ENCODE measurements at regions of chr19 and their contacts with region 1.

Region 1: DNA sequence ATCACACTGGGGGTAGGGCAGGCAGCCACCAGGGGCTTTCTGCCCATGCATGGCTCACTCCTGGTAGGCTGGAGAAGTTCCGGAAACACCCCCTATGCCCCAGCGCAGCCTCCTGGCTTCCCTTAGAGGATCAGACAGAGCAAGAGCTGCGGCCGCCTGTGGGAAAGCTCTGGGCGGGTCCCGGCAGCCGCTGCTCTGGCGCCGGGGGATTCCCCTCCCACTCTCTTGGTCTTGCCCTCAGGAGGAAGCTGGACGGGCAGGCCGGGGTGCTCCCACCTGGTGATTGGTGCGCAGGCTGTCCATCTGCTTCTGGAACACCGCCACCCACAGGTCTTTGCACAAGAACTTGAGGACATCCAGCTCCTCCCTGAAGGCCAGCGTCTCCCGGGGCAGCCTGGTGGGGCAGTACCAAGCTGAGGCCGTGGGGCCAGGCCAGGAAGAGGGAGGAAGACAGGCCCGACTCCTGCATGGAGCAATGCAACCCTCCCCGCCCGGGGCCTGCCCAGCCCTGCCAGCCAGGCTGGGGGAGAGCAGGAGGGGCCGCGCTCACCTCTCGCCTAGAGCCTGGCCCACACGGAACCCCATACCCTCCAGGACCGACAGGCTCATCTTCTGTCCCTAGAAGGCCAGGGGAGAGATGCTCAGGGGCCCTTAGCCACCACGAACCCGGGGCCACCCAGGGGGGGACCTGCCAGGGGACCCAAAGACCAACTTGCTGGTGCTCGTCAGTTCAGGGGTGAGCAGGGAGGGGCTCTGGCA is 4.0 kb upstream of the NKPD1 start:
- DNase-seq: peak in 4 of 5 donors; percentile 47 to 80 (median 50)
- ATAC-seq: peak; percentile 30 to 70 (median 64)
- H3K4me3 ChIP-seq: no peak overlapping the region
- H3K27ac ChIP-seq: peak overlapping the region in 2 of 12 donors; percentile 17 to 26
- H3K4me1 ChIP-seq: peaks cover 0 to 33% (median 20%) of the 10 kb centered on the region in 12 donors
- H3K27me3 ChIP-seq: peaks cover 0 to 15% (median 10%) of the 10 kb centered on the region in 9 donors
- CTCF ChIP-seq: peak in 1 of 12 donors; percentile 7
- POLR2A ChIP-seq: no peak

Region 2: GRCh38 chr19:44903602-44904425 is 260.9 kb before region 1 on chr19:
- intact Hi-C with region 1: no loop called
- DNase-seq: peak; percentile 59 to 87 (median 65)
- ATAC-seq: peak; percentile 48 to 79 (median 68)
- H3K4me3 ChIP-seq: no peak overlapping the region
- H3K27ac ChIP-seq: no peak overlapping the region
- H3K4me1 ChIP-seq: peaks cover 0 to 23% (median 6%) of the 10 kb centered on the region in 12 donors
- H3K27me3 ChIP-seq: peaks cover 0 to 34% (median 15%) of the 10 kb centered on the region in 9 donors
- CTCF ChIP-seq: peak; percentile 94 to 100 (median 99)
- POLR2A ChIP-seq: no peak

Region 3: DNA sequence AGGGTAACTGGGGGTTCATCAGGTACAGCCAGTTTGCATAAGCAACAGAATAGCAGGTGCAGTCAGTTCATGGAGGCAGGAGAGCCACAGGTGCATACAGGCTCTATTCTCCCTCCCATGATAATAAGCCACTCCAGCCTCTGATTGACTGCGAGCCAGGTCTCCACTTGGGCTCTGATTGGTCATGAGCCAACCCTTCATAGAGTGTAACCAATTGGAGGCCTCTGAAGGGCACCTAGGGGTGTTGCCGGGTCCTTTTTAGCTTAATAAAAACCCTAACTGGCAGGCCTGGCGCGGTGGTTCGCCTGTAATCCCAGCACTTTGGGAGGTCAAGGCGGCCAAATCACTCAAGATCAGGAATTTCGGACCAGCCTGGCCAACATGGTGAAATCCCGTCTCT is 166.7 kb after region 1 on chr19:
- intact Hi-C with region 1: loop called in 1 of 10 experiments (anchors 10 kb)
- DNase-seq: no peak
- ATAC-seq: no peak
- H3K4me3 ChIP-seq: no peak overlapping the region
- H3K27ac ChIP-seq: no peak overlapping the region
- H3K4me1 ChIP-seq: peaks cover 0 to 2% (median 0%) of the 10 kb centered on the region in 12 donors
- H3K27me3 ChIP-seq: no peaks in the 10 kb centered on the region
- CTCF ChIP-seq: no peak
- POLR2A ChIP-seq: no peak